ENCODE measurements at regions of chr18 and their contacts with region 1.

Region 1: DNA sequence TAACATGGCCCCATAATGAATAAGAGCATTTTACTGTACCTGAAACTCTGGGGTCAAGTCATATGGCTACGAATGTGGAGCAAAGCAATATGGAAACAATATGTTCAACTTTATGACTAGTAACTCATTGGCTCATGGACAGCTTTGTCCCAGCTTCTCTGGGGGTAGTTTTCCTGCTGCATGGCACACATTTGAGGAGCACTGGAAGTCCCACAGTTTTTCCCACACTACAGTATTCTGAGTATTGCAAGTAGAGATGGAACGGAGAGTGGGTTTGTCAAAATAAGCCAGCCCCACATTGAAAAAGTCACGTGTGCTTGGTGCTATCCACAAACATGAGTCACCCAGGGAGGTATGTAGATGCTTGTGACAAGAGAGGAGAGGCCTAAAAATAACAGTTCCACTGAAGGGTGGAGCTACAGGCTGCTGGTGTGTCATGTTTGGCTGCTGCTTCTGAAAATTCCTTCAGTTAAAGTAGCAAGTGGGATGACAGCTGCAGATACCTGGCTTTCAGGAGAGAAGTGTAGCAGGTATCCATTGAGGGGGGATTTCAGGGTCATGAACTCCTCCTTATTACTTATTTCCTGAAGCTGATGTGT is 48.2 kb upstream of the CTAGE1 start:
- DNase-seq: peak; percentile 45 to 88
- H3K4me3 ChIP-seq: no peak overlapping the region
- H3K27ac ChIP-seq: peak overlapping the region; percentile 78 to 93
- H3K4me1 ChIP-seq: peaks cover 17 to 25% of the 10 kb centered on the region in 2 donors
- H3K27me3 ChIP-seq: no peaks in the 10 kb centered on the region
- CTCF ChIP-seq: no peak

Region 2: DNA sequence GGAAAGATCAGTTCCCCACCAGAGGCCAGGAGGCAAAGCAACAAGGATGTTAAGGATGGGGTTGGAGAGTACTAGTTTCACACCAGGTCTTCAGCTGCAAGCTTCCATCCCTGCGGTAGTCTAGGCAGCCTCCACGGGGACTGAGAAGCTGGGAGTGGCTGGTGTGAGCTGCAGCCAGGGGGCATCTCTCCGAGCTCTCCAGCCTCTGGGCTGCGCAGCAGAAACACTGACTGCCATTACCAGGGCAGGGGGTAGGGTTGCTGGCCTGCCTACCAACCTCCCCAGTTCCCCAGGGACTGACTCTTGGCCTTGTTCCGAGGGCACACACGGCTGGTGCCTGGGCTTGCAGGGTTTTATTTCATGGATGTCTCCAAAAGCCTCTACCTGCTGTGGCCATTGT is 280.7 kb before region 1 on chr18:
- intact Hi-C with region 1: loop called (anchors 2 kb)
- DNase-seq: no peak
- H3K4me3 ChIP-seq: peak overlapping the region in 1 of 2 donors; percentile 39
- H3K27ac ChIP-seq: peak overlapping the region; percentile 89 to 97
- H3K4me1 ChIP-seq: peaks cover 22 to 80% of the 10 kb centered on the region in 2 donors
- H3K27me3 ChIP-seq: no peaks in the 10 kb centered on the region
- CTCF ChIP-seq: peak; percentile 36 to 46 (median 36)

Region 3: GRCh38 chr18:22422909-22423548 is 42.9 kb before region 1 on chr18:
- intact Hi-C with region 1: loop called (anchors 2 kb)
- DNase-seq: peak in 1 of 2 donors; percentile 80
- H3K4me3 ChIP-seq: no peak overlapping the region
- H3K27ac ChIP-seq: peak overlapping the region; percentile 71
- H3K4me1 ChIP-seq: peaks cover 8 to 26% of the 10 kb centered on the region in 2 donors
- H3K27me3 ChIP-seq: no peaks in the 10 kb centered on the region
- CTCF ChIP-seq: no peak

Region 4: DNA sequence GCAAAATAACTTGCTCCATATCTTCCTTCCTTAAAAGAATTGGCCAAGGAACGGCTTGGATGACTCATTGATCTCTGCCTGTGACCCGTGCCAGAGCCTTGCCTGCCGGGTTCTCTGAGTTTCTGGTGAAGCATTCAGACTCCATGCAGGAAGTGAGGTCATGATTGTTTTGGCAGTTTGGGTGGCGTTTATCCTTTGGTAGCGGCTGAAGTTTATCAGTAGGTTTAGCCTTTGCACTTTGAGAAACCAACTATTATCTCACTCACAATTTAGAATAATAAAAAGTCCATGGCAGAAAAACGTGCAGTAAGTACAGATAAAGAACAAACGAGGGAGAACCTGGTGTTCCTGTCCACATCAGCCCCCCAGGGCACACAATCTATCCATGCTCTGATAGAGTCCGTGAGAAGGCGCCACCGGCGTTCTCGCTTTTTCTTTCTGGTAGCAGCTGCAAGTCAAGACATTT is 33.3 kb before region 1 on chr18:
- intact Hi-C with region 1: loop called (anchors 2 kb)
- DNase-seq: peak; percentile 51 to 94
- H3K4me3 ChIP-seq: peak overlapping the region in 1 of 2 donors; percentile 60
- H3K27ac ChIP-seq: peak overlapping the region; percentile 68 to 86
- H3K4me1 ChIP-seq: peaks cover 7 to 9% of the 10 kb centered on the region in 2 donors
- H3K27me3 ChIP-seq: no peaks in the 10 kb centered on the region
- CTCF ChIP-seq: no peak

Region 5: DNA sequence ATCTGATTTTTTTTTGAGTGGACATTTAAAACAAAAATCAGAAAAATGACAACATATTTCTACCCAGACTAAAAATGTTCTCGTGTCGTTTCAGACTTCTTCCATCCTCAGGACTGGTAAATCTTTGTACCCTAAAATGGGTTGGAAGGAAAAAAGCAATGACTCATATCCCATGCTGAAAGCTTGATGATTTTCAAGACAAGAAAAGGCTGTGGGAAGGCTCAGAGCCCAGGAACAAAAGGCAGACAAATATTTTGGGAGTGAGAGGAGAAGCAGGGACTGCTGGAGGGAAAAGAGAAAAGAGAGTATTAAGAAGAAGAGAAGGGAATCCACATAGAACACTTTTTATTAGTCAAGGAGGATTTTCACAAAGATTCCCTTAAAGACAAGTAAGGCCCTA is 28.8 kb after region 1 on chr18:
- intact Hi-C with region 1: loop called (anchors 1 kb)
- DNase-seq: peak in 1 of 2 donors; percentile 66
- H3K4me3 ChIP-seq: no peak overlapping the region
- H3K27ac ChIP-seq: peak overlapping the region; percentile 73 to 75
- H3K4me1 ChIP-seq: peaks cover 5 to 13% of the 10 kb centered on the region in 2 donors
- H3K27me3 ChIP-seq: no peaks in the 10 kb centered on the region
- CTCF ChIP-seq: no peak

Region 6: GRCh38 chr18:22563098-22563707 is 97.2 kb after region 1 on chr18:
- intact Hi-C with region 1: loop called (anchors 1 kb)
- DNase-seq: peak in 1 of 2 donors; percentile 74
- H3K4me3 ChIP-seq: peak overlapping the region; percentile 21 to 57
- H3K27ac ChIP-seq: peak overlapping the region; percentile 92 to 99
- H3K4me1 ChIP-seq: peaks cover 0 to 16% of the 10 kb centered on the region in 2 donors
- H3K27me3 ChIP-seq: no peaks in the 10 kb centered on the region
- CTCF ChIP-seq: peak; percentile 62 to 84 (median 79)

Measured in ascending aorta (tissue), 2 donors.